Activated B cell treated with CpG ODN at 0.5 μM for 24 hours (primary cell): ENCODE measurements at regions of chr1 and their contacts with region 1.

Region 1: DNA sequence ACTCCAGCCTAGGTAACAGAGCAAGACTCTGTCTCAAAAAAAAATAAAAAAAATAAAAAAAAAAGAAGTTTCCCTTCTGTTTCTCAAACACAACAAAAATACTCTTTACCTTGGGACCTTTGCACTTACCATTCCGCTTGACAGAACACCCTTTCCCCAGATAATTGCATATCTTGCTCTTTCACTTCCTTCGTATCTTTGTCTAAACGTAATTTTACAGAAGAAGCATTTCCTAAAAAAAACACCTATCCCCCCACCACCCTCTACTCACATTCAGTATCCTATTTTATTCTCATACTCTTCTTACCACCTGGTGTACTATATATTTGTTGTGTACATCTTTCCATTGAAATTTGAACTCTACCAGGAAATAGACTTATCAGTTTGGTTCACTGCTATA is 32.7 kb downstream of the ASH1L start:
- DNase-seq: no peak
- ATAC-seq: peak; percentile 86
- H3K4me3 Mint-ChIP-seq: peak overlapping the region; percentile 74
- H3K27ac Mint-ChIP-seq: peak overlapping the region; percentile 81
- H3K4me1 Mint-ChIP-seq: peaks cover 52% of the 10 kb centered on the region
- H3K27me3 Mint-ChIP-seq: no peaks in the 10 kb centered on the region
- CTCF ChIP-seq: no peak

Region 2: DNA sequence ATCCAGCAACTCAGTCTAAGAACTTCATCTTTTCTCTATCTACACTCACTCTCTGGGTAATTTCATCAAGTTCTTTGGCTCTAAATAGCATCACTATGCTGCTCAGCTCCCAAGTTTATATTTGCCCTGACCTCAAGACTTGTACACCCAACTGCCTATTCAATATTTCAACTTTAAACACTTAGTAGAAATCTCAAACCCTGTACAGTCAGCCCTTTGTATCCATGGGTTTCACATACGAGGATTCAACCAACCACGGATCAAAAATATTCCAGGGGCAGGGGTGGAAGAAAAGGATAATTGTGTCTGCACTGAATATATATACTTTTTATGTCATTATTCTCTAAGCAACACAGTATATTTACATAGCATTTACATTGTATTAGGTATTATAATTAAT is 18.8 kb after region 1 on chr1:
- CTCF ChIA-PET with region 1: no interaction called
- POLR2A ChIA-PET with region 1: interaction called, 3 read pairs
- intact Hi-C with region 1: loop called (anchors 2 kb)
- DNase-seq: no peak
- ATAC-seq: no peak
- H3K4me3 Mint-ChIP-seq: no peak overlapping the region
- H3K27ac Mint-ChIP-seq: no peak overlapping the region
- H3K4me1 Mint-ChIP-seq: peaks cover 54% of the 10 kb centered on the region
- H3K27me3 Mint-ChIP-seq: no peaks in the 10 kb centered on the region
- CTCF ChIP-seq: no peak

Region 3: GRCh38 chr1:156001682-156002171 is 471.8 kb after region 1 on chr1:
- CTCF ChIA-PET with region 1: no interaction called
- POLR2A ChIA-PET with region 1: no interaction called
- intact Hi-C with region 1: no loop called
- DNase-seq: no peak
- ATAC-seq: no peak
- H3K4me3 Mint-ChIP-seq: no peak overlapping the region
- H3K27ac Mint-ChIP-seq: no peak overlapping the region
- H3K4me1 Mint-ChIP-seq: no peaks in the 10 kb centered on the region
- H3K27me3 Mint-ChIP-seq: no peaks in the 10 kb centered on the region
- CTCF ChIP-seq: no peak